Common myeloid progenitor, CD34-positive (primary cell): ENCODE measurements at regions of chr3 and their contacts with region 1.

Region 1: DNA sequence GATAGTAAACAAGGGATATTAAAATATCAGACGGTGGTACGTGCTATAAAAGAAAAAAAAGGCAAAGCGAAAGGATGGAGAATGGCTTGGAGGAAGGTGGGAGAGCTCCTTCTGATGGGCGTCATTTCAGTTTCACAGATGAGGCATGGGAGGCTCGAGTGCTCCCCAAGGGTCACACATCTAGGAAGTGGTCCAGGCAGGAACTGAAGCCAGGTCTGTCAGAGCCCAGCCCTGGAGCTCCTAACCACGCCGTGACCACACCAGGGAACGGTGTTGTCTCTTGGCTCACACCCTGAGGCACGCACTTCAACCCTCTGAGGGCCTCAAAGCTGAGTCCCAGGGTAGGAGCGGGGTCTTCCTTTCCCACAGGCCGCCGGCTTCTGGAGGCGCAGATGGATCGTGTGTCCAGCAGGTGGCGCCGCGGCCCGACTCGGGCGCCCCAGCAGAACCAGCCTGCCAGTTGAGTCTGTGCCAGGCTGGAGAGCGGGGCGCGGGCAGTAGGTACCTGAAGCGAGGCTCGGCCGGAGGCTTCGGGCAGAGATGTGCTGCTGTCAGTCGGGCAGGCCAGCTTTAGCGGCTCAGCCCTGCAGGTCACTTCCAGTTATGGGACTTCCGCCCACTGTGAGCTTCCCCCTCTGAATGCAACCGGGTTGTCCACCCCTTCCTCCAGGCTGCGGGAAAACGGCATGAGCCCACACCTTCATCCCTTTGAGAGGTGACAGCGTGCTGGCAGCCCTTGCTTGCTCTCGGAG is 68.1 kb downstream of the SLC6A1 start:
- DNase-seq: peak; percentile 42 to 68 (median 65)
- H3K4me3 ChIP-seq: no peak overlapping the region
- H3K27ac ChIP-seq: no peak overlapping the region
- H3K4me1 ChIP-seq: peaks cover 0 to 7% (median 3%) of the 10 kb centered on the region in 4 experiments
- H3K27me3 ChIP-seq: peaks cover 0 to 27% (median 5%) of the 10 kb centered on the region in 5 experiments

Region 2: GRCh38 chr3:10758304-10759061 is 302.2 kb before region 1 on chr3:
- CTCF ChIA-PET with region 1: interaction called, 54 read pairs
- POLR2A ChIA-PET with region 1: no interaction called
- DNase-seq: peak; percentile 65 to 84 (median 78)
- H3K4me3 ChIP-seq: no peak overlapping the region
- H3K27ac ChIP-seq: no peak overlapping the region
- H3K4me1 ChIP-seq: no peaks in the 10 kb centered on the region
- H3K27me3 ChIP-seq: peaks cover 0 to 37% (median 9%) of the 10 kb centered on the region in 5 experiments

Region 3: DNA sequence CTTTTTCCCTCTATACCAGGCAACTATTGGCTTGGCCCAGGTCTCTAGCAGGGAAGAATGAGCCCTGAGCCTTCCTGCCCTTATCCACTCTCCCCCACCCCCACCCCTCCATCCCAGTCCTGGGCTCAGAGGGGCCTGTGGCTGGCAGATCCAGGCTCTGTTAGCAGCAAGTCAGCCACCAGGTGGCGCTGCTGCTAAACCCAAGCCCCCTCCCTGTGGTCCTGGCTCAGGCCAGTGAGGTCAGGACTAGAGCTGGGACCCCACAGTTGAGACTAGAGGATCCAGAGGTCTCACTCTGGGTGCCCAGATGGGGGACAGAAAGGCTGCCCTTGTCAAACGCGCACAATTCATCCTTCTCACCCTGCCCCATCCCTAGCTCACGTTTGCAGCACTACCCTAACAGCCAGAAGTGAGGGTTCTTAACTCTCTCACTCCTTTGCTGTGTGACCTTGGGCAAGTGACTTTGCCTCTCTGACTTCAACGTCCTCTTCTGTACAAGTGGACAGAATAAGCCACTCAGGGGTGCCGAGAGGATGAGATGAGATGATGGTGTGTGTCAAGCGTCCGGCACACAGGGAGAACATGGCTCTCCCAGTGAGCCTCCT is 114.9 kb before region 1 on chr3:
- CTCF ChIA-PET with region 1: interaction called, 47 read pairs
- POLR2A ChIA-PET with region 1: no interaction called
- DNase-seq: peak; percentile 64 to 81 (median 74)
- H3K4me3 ChIP-seq: no peak overlapping the region
- H3K27ac ChIP-seq: no peak overlapping the region
- H3K4me1 ChIP-seq: no peaks in the 10 kb centered on the region
- H3K27me3 ChIP-seq: peaks cover 0 to 16% (median 5%) of the 10 kb centered on the region in 5 experiments

Region 4: GRCh38 chr3:11071096-11071755 is 10.6 kb after region 1 on chr3:
- CTCF ChIA-PET with region 1: interaction called, 11 read pairs
- POLR2A ChIA-PET with region 1: no interaction called
- DNase-seq: no peak
- H3K4me3 ChIP-seq: no peak overlapping the region
- H3K27ac ChIP-seq: no peak overlapping the region
- H3K4me1 ChIP-seq: peaks cover 0 to 12% (median 5%) of the 10 kb centered on the region in 4 experiments
- H3K27me3 ChIP-seq: peaks cover 0 to 10% (median 0%) of the 10 kb centered on the region in 5 experiments

Region 5: DNA sequence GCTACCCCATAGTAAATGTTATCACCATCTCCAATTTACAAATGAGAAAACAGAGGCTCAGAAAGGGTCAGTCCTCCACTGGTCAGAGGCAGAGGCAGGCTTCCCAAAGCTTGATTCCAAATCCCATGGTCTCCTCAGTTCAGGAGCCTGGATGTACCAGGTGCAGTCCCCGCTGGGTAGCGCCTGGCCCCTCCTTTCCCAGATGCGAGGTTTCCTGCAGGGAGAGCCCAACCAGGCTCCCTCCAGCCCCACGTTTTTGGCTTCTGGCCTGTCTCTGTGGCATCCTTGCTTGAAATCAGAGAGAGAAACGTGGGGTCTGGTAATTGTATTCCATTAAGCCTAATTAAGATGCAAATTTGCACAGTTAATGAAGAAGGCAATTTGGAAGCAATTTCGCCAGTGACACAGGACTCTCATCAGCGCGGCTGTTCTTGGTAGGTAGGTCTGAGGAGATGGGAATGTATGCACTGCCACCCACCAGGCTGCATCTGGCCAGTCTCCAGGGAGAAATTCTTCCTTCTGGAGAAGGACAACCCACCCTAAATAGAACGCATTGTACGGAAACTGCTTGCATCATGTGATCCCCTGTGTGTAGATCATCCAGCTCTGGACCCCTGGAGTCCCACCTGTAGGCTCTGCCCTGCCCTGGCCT is 144.1 kb after region 1 on chr3:
- CTCF ChIA-PET with region 1: interaction called, 15 read pairs
- POLR2A ChIA-PET with region 1: no interaction called
- DNase-seq: no peak
- H3K4me3 ChIP-seq: no peak overlapping the region
- H3K27ac ChIP-seq: no peak overlapping the region
- H3K4me1 ChIP-seq: peaks cover 0 to 5% (median 0%) of the 10 kb centered on the region in 4 experiments
- H3K27me3 ChIP-seq: peaks cover 0 to 2% (median 0%) of the 10 kb centered on the region in 5 experiments

Region 6: DNA sequence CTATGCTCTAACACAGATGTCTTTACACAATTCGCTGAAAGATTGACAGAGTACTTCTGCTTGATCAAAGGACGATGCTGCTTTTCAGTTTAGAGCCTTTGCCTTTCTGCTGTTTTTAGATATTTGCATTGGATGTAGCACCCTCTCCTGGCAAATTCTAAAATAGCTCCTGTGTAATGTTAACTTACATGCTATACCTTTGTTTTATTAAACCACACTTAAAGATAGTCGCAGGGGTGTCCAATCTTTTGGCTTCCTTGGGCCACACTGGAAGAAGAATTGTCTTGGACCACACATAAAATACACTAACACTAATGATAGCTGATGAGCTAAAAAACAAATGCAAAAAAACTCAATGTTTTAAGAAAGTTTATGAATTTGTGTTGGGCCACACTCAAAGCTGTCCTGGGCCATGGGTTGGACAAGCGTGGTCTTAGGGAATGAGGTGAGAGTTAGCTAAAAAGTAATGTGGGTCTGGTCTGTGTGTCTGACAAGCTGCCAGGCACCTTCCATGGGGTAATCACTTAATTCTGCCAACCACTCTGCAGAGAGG is 274.5 kb after region 1 on chr3:
- CTCF ChIA-PET with region 1: interaction called, 34 read pairs
- POLR2A ChIA-PET with region 1: no interaction called
- DNase-seq: peak; percentile 45 to 80 (median 77)
- H3K4me3 ChIP-seq: no peak overlapping the region
- H3K27ac ChIP-seq: no peak overlapping the region
- H3K4me1 ChIP-seq: peaks cover 0 to 6% (median 0%) of the 10 kb centered on the region in 4 experiments
- H3K27me3 ChIP-seq: no peaks in the 10 kb centered on the region